Posterior vena cava (tissue), 2 donors: ENCODE measurements at regions of chr20 and their contacts with region 1.

Region 1: GRCh38 chr20:49256261-49256660 is 21.6 kb downstream of the ZNFX1 start:
- DNase-seq: no peak

Region 2: DNA sequence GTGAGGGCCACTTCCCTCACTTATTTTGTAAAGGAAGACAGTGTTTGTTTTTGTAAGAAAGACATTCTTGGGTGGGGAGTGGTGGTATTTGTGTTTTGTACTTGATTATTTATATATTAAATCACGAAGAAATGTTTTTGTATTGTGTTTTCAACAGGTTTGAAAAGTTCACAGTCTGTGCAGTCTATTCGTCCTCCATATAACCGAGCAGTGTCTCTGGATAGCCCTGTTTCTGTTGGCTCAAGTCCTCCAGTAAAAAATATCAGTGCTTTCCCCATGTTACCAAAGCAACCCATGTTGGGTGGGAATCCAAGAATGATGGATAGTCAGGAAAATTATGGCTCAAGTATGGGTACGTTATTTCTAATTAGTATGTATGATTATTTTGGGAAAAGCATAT is 1617.4 kb before region 1 on chr20:
- intact Hi-C with region 1: loop called in 1 of 2 experiments (anchors 5 kb)
- DNase-seq: no peak

Region 3: DNA sequence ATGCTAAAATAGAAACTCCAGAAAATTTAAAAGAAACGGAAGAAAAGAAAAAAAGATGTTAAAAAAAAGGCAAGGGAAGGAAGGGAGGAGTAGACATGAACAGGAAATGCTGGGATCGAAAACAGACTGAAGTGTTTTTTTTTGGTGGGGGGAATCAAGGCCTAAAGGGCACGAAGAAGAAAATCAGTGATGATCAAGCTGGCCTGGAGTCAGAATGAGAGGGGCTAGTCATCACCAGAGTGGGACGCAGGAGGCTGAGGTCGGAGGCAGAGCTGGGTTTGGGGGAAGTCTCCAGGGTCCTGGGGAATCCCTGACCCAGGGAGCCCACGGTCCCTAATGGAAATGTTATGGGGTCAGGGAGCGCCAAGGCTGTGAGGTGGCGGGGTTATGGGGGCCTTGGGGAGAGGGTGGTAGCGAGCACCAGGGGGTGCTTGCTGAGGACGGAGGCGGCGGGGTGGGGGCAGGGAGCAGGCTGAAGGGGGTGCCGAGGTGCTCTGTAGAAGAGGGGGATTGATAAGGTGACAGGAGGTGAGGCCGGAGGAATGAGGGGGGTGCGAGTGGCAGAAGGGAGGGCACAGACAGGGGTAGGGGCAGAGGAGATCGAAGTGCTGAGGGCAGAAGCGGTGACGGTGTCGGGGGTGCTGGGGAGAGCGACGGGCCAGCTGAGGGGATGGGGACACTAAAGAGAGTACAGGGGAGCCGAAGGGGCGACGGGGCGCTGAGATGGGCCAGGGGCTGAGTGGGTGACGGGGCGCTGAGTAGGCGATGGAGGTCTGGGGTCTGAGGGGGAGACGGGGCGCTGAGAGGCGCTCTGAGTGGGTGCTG is 20.9 kb after region 1 on chr20:
- intact Hi-C with region 1: loop called in 1 of 2 experiments (anchors 1 kb)
- DNase-seq: peak; percentile 87

Region 4: GRCh38 chr20:49323622-49324238 is 67.5 kb after region 1 on chr20:
- intact Hi-C with region 1: no loop called
- DNase-seq: peak; percentile 56